Activated T-helper 2 cell treated with anti-CD3 and anti-CD28 coated beads, Interferon-gamma antibody, Interleukin-2, Interleukin-4, amounts not matched to agents 10 μg/mL and 5 μg/mL and 100 μg/mL, durations not matched to agents 14 hours and 24 hours and 36 hours (primary cell): ENCODE measurements at regions of chr6 and their contacts with region 1.

Region 1: GRCh38 chr6:75526502-75527127 is 33.0 kb upstream of the FILIP1 start:
- DNase-seq: peak; percentile 28
- H3K4me3 Mint-ChIP-seq: no peak overlapping the region
- H3K27ac Mint-ChIP-seq: no peak overlapping the region
- H3K4me1 Mint-ChIP-seq: no peaks in the 10 kb centered on the region
- H3K27me3 Mint-ChIP-seq: peaks cover 37% of the 10 kb centered on the region

Region 2: GRCh38 chr6:75266716-75267291 is 259.8 kb before region 1 on chr6:
- intact Hi-C with region 1: loop called (anchors 1 kb)
- DNase-seq: no peak
- H3K4me3 Mint-ChIP-seq: no peak overlapping the region
- H3K27ac Mint-ChIP-seq: no peak overlapping the region
- H3K4me1 Mint-ChIP-seq: peaks cover 22% of the 10 kb centered on the region
- H3K27me3 Mint-ChIP-seq: no peaks in the 10 kb centered on the region

Region 3: GRCh38 chr6:75296811-75297779 is 229.5 kb before region 1 on chr6:
- intact Hi-C with region 1: loop called (anchors 1 kb)
- DNase-seq: no peak
- H3K4me3 Mint-ChIP-seq: no peak overlapping the region
- H3K27ac Mint-ChIP-seq: no peak overlapping the region
- H3K4me1 Mint-ChIP-seq: peaks cover 3% of the 10 kb centered on the region
- H3K27me3 Mint-ChIP-seq: peaks cover 2% of the 10 kb centered on the region